Activated CD8-positive, alpha-beta T cell treated with anti-CD3 and anti-CD28 coated beads, Interleukin-2, amount 10 ng/mL, durations not matched to agents 7 days and 5 days (primary cell): ENCODE measurements at regions of chr3 and their contacts with region 1.

Region 1: DNA sequence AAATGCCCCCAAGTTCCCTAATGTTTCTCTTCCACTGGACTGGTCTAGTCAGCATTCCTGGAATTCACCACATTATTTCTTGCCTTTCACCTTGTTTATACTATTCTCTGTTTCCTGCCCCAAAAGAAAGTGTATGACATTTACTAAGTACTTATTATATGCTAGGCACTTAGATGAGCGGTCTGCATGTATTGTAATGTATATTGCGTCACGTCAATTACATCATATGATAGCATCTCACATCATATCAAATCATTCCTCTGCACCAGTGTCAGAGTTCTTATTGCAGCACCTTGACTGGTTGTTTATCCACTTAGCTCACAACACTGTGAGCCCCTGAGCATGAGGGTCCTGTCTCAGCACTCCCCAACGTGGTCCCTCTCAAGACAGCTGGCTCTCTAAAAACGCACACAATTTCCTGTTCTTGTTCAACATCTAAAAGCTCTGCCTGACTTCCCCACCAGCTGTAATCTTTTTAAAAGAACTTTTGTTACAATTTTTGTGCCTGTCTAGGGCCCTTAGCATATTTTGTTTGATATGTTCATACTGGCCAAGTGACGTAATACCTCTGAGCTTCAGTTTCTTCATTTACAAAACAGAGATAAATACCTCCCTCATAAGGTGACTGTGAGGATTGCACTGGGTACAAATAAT is 58.8 kb downstream of the ARHGAP31 start:
- DNase-seq: peak; percentile 27
- ATAC-seq: peak; percentile 69
- H3K4me3 Mint-ChIP-seq: no peak overlapping the region
- H3K27ac Mint-ChIP-seq: no peak overlapping the region
- H3K4me1 Mint-ChIP-seq: peaks cover 24% of the 10 kb centered on the region
- H3K27me3 Mint-ChIP-seq: peaks cover 6% of the 10 kb centered on the region

Region 2: DNA sequence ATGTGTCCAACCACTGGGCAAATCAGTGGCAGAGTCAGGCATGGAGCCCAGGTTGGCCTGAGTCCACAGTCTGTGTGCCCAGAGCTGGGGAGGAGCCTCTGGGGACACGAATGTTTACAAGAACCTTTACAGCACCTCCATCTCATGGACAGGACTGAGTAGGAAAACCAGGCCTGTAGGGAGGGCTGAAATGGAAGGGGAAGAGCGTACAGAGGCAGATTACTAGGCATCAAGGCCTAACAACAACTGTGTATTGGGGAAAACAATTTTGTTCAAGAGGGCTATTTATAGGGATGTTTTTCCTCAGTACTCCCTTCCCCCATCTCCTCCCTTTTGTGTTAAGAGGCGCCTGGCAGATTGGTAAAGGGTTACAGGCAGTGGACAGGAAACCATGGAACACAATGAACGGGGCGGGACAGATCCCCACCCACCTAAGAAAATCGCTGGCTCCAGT is 73.8 kb before region 1 on chr3:
- CTCF ChIA-PET with region 1: interaction called, 16 read pairs
- POLR2A ChIA-PET with region 1: interaction called, 3 read pairs
- DNase-seq: no peak
- ATAC-seq: no peak
- H3K4me3 Mint-ChIP-seq: no peak overlapping the region
- H3K27ac Mint-ChIP-seq: no peak overlapping the region
- H3K4me1 Mint-ChIP-seq: peaks cover 1% of the 10 kb centered on the region
- H3K27me3 Mint-ChIP-seq: no peaks in the 10 kb centered on the region

Region 3: DNA sequence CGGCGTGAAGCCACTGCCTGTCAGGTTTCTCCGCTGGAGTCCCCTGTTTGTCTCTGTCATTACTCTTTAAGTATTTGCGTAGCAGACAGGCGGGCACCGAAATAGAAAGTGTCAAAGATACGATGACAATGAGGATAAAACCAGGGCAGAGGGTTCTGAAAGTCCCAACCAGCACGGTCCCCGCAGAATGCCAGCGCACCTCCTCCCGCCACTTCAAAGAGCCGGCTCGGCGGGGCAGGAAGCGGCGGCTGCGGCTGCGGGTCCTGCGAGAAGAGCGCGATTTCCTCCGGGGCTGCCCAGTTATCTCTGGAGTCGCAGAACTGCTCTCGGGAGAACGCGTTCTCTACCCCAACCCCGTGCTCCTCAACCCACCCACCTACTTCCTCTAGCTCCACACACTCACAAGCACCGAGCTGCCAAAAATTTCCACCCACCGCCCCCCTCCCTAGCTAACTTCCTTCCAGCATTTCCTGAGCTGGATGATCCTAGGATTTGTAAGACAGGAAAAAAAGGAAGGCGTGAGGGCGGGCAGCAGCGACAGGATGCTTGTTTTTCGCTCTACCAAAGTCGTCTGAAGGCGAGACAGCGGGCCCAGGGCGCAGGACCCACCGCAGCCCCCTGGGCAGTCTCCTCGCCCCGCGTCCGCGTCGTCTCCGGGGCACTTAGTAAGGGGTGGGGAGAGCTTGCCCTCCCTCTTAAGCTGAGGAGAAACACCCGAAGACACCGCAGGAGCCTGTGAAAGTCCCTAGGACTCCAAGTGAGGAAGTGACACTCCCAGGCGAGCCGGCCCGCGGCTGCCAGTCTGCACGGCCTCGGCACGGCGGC is 58.9 kb before region 1 on chr3 and contains the start of gene ARHGAP31:
- CTCF ChIA-PET with region 1: interaction called, 12 read pairs
- POLR2A ChIA-PET with region 1: no interaction called
- DNase-seq: peak; percentile 89
- ATAC-seq: peak; percentile 77
- H3K4me3 Mint-ChIP-seq: peak within 1 kb of the TSS; percentile 79
- H3K27ac Mint-ChIP-seq: peak within 1 kb of the TSS; percentile 85
- H3K4me1 Mint-ChIP-seq: peaks cover 57% of the 10 kb centered on the region
- H3K27me3 Mint-ChIP-seq: peaks cover 13% of the 10 kb centered on the region
- total RNA-seq, gene ARHGAP31: 2.3 to 2.5 TPM

Region 4: DNA sequence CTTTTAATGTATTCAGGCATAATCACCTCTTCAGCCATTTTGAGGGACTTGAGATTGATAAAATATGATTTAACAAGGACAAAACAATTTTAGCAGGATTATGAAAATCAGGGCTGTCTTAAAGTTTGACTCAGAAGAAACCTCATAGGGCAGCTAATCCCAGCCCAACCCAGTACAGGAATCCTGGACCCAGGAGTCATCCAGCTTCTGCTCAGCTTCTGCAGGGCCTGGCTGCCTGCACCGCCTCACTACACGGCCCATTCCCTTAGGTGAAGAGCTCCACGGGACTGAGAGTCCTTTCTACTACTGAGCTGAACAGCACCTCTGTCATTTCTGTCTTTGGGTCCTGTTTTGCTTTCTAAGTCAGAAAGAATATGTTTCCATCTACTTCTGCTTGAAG is 21.3 kb before region 1 on chr3:
- CTCF ChIA-PET with region 1: interaction called, 10 read pairs
- POLR2A ChIA-PET with region 1: no interaction called
- DNase-seq: no peak
- ATAC-seq: no peak
- H3K4me3 Mint-ChIP-seq: no peak overlapping the region
- H3K27ac Mint-ChIP-seq: no peak overlapping the region
- H3K4me1 Mint-ChIP-seq: no peaks in the 10 kb centered on the region
- H3K27me3 Mint-ChIP-seq: no peaks in the 10 kb centered on the region